Activated CD4-positive, alpha-beta T cell treated with anti-CD3 and anti-CD28 coated beads, Interleukin-2, amount 10 ng/mL, durations not matched to agents 24 days and 14 days (primary cell): ENCODE measurements at regions of chr20 and their contacts with region 1.

Region 1: DNA sequence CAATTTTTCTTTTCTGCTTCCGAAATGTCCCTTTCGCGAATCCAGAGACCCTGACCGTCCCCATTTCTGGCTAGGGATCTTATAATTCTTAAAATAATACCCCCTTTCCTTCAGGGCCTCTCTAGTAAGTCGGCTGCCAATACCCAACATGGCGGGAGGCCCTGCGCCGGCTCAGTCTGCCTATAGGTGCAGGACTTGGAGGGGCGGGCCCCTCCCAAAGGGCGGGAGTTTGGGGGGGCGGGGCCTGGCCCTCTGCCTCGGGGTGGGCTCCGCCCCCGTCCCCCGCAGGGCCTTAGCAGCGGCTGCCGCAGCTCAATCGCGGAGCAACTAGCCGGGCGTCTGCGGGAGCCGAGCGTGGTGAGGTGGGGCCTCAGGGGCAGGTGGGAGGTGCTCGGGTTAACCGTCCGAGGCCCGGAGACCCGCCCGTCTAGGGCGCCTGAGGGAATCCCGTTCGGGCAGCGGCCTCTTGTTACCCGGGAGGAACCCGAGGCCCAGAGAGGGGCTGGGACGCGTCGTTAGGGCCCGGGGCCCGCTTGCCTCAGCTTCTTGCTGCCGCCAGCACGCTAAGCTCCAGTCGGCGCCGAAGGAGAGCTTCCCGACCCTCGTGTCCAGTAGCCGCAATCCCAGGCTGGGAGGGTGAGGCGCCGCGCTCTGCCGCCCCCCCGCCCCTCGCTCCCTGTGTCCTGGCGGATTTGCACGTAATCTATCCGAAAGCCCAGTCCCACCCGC is at the start of gene CEP250:
- DNase-seq: peak; percentile 97
- H3K4me3 Mint-ChIP-seq: peak within 1 kb of the TSS; percentile 92
- H3K27ac Mint-ChIP-seq: peak within 1 kb of the TSS; percentile 98
- H3K4me1 Mint-ChIP-seq: peaks cover 29% of the 10 kb centered on the region
- H3K27me3 Mint-ChIP-seq: no peaks in the 10 kb centered on the region
- total RNA-seq, gene CEP250: 46.8 and 48.8 TPM in 2 replicates

Region 2: GRCh38 chr20:34615477-34615876 is 839.6 kb before region 1 on chr20:
- intact Hi-C with region 1: no loop called
- DNase-seq: no peak
- H3K4me3 Mint-ChIP-seq: no peak overlapping the region
- H3K27ac Mint-ChIP-seq: no peak overlapping the region
- H3K4me1 Mint-ChIP-seq: peaks cover 4% of the 10 kb centered on the region
- H3K27me3 Mint-ChIP-seq: no peaks in the 10 kb centered on the region

Region 3: GRCh38 chr20:35410613-35411012 is 44.4 kb before region 1 on chr20:
- intact Hi-C with region 1: loop called (anchors 5 kb)
- DNase-seq: no peak
- H3K4me3 Mint-ChIP-seq: peak overlapping the region; percentile 94
- H3K27ac Mint-ChIP-seq: peak overlapping the region; percentile 93
- H3K4me1 Mint-ChIP-seq: peaks cover 13% of the 10 kb centered on the region
- H3K27me3 Mint-ChIP-seq: no peaks in the 10 kb centered on the region

Region 4: GRCh38 chr20:35490736-35491181 is 35.7 kb after region 1 on chr20:
- intact Hi-C with region 1: loop called (anchors 5 kb)
- DNase-seq: peak; percentile 91
- H3K4me3 Mint-ChIP-seq: peak overlapping the region; percentile 98
- H3K27ac Mint-ChIP-seq: peak overlapping the region; percentile 99
- H3K4me1 Mint-ChIP-seq: peaks cover 42% of the 10 kb centered on the region
- H3K27me3 Mint-ChIP-seq: no peaks in the 10 kb centered on the region